ENCODE measurements at regions of chr3 and their contacts with region 1.

Region 1: DNA sequence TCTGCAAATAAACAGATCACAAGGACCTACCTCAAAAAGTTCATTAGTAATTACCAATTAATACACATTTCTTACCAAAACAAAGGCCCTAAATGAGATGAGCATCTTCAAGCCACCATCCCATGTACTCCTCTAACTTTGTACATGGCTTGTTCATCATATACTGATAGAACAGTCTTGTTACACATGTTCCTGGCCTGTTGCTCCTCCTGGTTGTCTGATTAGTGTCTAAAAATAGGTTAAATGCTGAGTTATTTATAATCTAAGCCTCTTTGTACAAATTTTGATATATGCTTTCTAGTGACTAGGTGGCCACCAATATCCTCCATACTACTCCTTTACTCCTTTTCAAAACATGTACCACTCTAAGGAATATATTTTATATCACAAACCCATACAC is 25.0 kb downstream of the TBC1D5 start:
- DNase-seq: no peak
- ATAC-seq: no peak
- H3K4me3 ChIP-seq: no peak overlapping the region
- H3K27ac ChIP-seq: no peak overlapping the region
- H3K4me1 ChIP-seq: no peaks in the 10 kb centered on the region
- H3K27me3 ChIP-seq: no peaks in the 10 kb centered on the region
- CTCF ChIP-seq: no peak

Region 2: GRCh38 chr3:17678116-17678741 is 39.2 kb before region 1 on chr3:
- CTCF ChIA-PET with region 1: no interaction called
- POLR2A ChIA-PET with region 1: no interaction called
- intact Hi-C with region 1: loop called (anchors 5 kb)
- DNase-seq: no peak
- ATAC-seq: no peak; the same call in 1 of the 2 replicates
- H3K4me3 ChIP-seq: no peak overlapping the region
- H3K27ac ChIP-seq: no peak overlapping the region
- H3K4me1 ChIP-seq: no peaks in the 10 kb centered on the region; the same call in 1 of the 2 replicates
- H3K27me3 ChIP-seq: no peaks in the 10 kb centered on the region
- CTCF ChIP-seq: no peak

Measured in PC-3 (cell line).